Activated CD8-positive, alpha-beta T cell treated with anti-CD3 and anti-CD28 coated beads for 36 hours (primary cell): ENCODE measurements at regions of chr13 and their contacts with region 1.

Region 1: DNA sequence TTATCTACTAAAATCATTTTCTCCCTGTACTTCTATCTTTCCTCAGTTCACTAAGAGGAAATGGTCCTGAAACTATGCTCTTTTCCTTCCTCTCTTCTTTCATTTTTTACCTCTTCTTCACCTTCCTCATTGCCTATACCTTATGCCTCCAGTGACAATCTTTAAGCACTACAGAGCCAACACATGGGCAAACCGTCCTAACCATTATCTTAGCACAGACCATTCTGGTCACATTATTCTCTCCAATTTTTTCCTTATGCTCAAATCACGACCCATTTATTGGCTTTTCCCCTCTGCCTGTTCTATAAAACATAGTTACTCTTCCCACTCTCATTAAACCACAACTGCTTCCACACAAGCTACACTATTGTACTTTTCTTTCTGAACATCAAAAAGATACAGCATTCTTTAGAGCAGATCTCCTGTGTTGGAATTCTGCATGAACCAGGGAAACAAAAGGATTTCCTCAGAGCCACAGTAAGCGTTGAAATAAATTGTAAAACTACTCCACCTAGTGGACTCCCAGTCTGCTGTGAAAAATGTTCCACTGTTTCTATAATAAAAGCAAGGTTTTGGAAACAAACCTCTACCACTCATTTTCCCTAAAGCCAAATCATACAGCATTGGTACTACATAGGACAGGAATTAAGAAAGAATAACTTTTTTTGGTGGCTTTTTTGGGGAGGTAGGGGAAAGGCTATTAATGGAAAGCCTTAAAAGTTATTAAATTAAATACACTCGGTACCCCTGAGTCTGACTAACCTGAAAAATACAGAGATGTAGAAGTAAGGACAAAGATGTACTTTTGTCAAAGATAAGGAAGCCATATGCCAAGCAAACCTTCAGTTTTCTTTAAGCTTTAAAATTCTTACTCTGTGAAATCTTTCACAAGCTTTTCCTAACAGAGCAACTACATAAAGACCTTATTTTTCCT is 19.5 kb downstream of the NUFIP1 start:
- DNase-seq: no peak
- ATAC-seq: no peak
- H3K4me3 Mint-ChIP-seq: no peak overlapping the region
- H3K27ac Mint-ChIP-seq: no peak overlapping the region
- H3K4me1 Mint-ChIP-seq: peaks cover 1% of the 10 kb centered on the region
- H3K27me3 Mint-ChIP-seq: no peaks in the 10 kb centered on the region
- CTCF ChIP-seq: peak; percentile 81

Region 2: GRCh38 chr13:44826591-44827350 is 143.0 kb before region 1 on chr13:
- CTCF ChIA-PET with region 1: no interaction called
- POLR2A ChIA-PET with region 1: no interaction called
- intact Hi-C with region 1: no loop called
- DNase-seq: no peak
- ATAC-seq: no peak
- H3K4me3 Mint-ChIP-seq: no peak overlapping the region
- H3K27ac Mint-ChIP-seq: no peak overlapping the region
- H3K4me1 Mint-ChIP-seq: no peaks in the 10 kb centered on the region
- H3K27me3 Mint-ChIP-seq: peaks cover 3% of the 10 kb centered on the region
- CTCF ChIP-seq: no peak

Region 3: GRCh38 chr13:44954224-44954623 is 15.6 kb before region 1 on chr13:
- CTCF ChIA-PET with region 1: interaction called, 10 read pairs
- POLR2A ChIA-PET with region 1: no interaction called
- intact Hi-C with region 1: no loop called
- DNase-seq: no peak
- ATAC-seq: no peak
- H3K4me3 Mint-ChIP-seq: no peak overlapping the region
- H3K27ac Mint-ChIP-seq: no peak overlapping the region
- H3K4me1 Mint-ChIP-seq: no peaks in the 10 kb centered on the region
- H3K27me3 Mint-ChIP-seq: no peaks in the 10 kb centered on the region
- CTCF ChIP-seq: no peak

Region 4: GRCh38 chr13:45004096-45004495 is 34.3 kb after region 1 on chr13:
- CTCF ChIA-PET with region 1: no interaction called
- POLR2A ChIA-PET with region 1: no interaction called
- intact Hi-C with region 1: no loop called
- DNase-seq: no peak
- ATAC-seq: no peak
- H3K4me3 Mint-ChIP-seq: no peak overlapping the region
- H3K27ac Mint-ChIP-seq: no peak overlapping the region
- H3K4me1 Mint-ChIP-seq: no peaks in the 10 kb centered on the region
- H3K27me3 Mint-ChIP-seq: no peaks in the 10 kb centered on the region
- CTCF ChIP-seq: no peak